ENCODE measurements at regions of chr11 and their contacts with region 1.

Region 1: DNA sequence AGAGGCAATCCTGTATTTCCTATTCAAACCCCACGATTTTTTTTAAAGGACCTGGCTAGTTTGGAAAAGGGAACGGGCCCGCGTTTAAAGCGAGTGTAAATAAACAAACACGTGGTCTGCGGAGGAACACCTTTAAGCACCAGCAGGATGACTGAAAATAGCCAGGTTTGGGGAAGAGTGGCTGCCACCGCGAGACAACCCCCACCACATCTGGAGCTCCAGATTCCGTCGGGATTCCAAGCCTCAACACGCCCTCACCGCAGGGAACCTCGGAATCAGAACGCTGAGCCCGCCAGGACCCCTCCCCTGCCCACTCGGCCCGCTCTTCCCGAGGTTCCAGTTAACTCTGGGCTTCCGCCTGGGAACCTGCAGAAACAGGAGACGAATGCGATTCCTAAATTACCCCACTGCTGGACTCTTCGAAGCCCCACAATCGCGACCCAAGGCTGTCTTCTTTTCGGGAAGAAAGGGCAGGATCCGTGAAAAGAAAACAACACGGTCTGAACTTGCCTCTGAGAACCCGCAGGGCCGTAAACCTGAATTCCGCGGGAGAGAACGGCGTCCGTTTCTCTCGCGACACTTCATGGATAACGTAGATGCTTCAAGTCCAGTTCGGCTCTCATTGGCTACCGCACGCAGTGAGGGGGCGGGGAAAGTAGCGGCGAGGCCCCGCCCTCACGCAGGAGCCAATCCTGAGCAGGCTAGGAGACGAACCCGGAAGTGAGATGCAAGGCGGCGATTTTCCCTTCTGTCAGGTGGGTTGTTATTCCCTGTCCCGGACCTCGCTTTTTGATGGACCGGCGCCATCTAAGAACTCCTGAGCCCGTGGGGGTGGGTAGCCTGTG is at the starts of genes ANKRD49 and MRE11:
- DNase-seq: peak; percentile 97
- ATAC-seq: peak; percentile 100
- H3K4me3 Mint-ChIP-seq: peak within 1 kb of the TSS; percentile 94
- H3K27ac Mint-ChIP-seq: peak within 1 kb of the TSS; percentile 97
- H3K4me1 Mint-ChIP-seq: peaks cover 24% of the 10 kb centered on the region
- H3K27me3 Mint-ChIP-seq: no peaks in the 10 kb centered on the region
- total RNA-seq, gene ANKRD49: 20.8 to 22.4 TPM
- total RNA-seq, gene MRE11: 36.8 to 51.3 TPM

Region 2: DNA sequence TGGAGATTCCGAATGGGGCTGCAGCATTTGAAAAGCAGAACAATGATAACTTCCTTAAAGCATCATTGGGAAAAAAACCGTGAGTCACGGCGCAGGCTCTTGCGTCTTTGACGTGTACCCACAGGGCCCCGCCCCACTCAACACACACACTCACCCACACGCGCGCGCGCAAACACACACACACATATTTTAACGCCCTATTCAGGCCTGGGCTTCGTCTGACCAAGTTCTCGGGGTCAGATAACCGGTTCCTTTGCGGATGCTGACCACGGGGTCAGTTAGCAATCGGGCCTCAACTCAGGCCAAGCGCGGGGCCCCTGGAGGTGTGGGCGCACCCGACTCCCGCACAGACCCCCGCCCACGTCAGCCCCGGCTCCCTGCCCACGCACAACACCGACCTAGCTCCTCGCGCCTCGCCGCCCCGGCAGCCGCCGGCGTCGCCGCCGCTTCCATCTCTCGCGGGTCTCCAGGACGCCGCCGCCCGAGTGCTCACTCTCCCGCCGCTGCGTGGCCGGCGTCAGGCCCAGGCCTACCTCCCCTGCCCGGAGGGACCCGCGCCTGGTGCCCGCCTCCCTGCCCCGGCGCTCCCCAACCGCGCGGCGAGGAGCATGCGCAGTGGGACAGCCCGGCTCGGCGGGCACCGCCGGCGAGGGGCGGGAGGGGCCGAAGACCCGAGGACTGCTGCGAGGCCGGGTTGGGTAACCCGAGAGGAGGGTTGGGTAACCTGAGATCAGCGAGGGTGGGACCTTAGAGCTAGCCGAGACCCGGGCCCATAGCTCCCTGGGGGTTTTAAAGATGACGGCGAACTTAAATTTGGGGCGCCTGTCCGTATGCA is 1295.9 kb before region 1 on chr11 and contains the start of gene SLC36A4:
- CTCF ChIA-PET with region 1: no interaction called
- POLR2A ChIA-PET with region 1: no interaction called
- intact Hi-C with region 1: loop called in 1 of 2 experiments (anchors 5 kb)
- DNase-seq: peak; percentile 94
- ATAC-seq: peak; percentile 92
- H3K4me3 Mint-ChIP-seq: peak within 1 kb of the TSS; percentile 94
- H3K27ac Mint-ChIP-seq: peak within 1 kb of the TSS; percentile 97
- H3K4me1 Mint-ChIP-seq: peaks cover 19% of the 10 kb centered on the region
- H3K27me3 Mint-ChIP-seq: peaks cover 1% of the 10 kb centered on the region
- total RNA-seq, gene SLC36A4: 13.9 to 16.1 TPM

Region 3: GRCh38 chr11:93662177-93662575 is 831.3 kb before region 1 on chr11:
- CTCF ChIA-PET with region 1: no interaction called
- POLR2A ChIA-PET with region 1: no interaction called
- intact Hi-C with region 1: loop called in 1 of 2 experiments (anchors 2 kb)
- DNase-seq: no peak
- ATAC-seq: no peak
- H3K4me3 Mint-ChIP-seq: peak overlapping the region; percentile 94
- H3K27ac Mint-ChIP-seq: peak overlapping the region; percentile 95
- H3K4me1 Mint-ChIP-seq: peaks cover 44% of the 10 kb centered on the region
- H3K27me3 Mint-ChIP-seq: no peaks in the 10 kb centered on the region

Region 4: DNA sequence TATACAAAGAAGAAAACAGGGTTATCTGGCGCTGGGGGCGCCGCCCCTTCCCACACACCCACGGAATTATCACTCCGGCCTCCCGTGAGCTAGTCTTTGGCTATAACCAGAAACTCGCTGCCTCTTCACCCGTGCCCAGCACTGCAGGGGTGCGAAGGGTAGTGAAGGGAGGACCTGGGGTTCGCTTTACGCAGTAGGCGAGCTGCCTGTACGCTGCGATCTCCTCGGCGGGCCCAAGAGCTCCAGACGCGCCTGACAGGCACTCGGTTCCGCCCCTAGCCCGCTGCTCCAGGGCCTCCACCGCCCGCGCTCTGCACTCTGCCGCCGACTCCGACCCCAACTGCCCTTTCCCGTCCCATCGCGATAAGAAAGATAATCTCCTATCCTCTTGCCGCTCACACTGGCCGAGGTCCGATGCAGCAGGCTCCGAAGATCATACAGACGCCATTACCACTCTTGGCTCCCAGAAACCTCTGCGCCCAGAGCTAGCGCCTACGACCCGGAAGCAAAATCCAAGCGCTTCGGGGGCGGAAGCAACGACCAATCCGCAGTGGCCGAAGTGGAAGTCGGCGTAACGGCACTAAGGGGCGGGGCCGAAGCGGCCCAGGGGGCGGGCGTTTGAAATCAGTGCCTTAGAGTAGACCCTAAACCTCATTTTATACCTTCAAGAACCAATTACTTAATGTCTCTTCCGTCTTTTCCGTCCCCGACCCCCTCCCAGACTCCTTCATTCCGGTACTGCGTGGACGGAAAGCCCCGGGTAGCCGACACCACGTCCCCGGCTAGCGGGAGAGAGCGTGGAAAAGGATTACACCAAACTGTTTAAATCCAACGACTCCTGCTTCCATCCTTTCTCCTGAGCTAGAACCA is 479.8 kb after region 1 on chr11 and contains the starts of genes CWC15 and KDM4D:
- CTCF ChIA-PET with region 1: no interaction called
- POLR2A ChIA-PET with region 1: no interaction called
- intact Hi-C with region 1: loop called in 1 of 2 experiments (anchors 1 kb)
- DNase-seq: peak; percentile 97
- ATAC-seq: peak; percentile 99
- H3K4me3 Mint-ChIP-seq: peak within 1 kb of the TSS; percentile 84
- H3K27ac Mint-ChIP-seq: peak within 1 kb of the TSS; percentile 94
- H3K4me1 Mint-ChIP-seq: peaks cover 27% of the 10 kb centered on the region
- H3K27me3 Mint-ChIP-seq: no peaks in the 10 kb centered on the region
- total RNA-seq, gene CWC15: 74.7 to 85.0 TPM
- total RNA-seq, gene KDM4D: 1.5 to 1.8 TPM

Measured in activated CD4-positive, alpha-beta T cell treated with anti-CD3 and anti-CD28 coated beads for 36 hours (primary cell).